Esophagus squamous epithelium (tissue), 5 donors: ENCODE measurements at regions of chr11 and their contacts with region 1.

Region 1: GRCh38 chr11:12893787-12894672 is 115.1 kb upstream of the RASSF10 start:
- DNase-seq: no peak
- H3K4me3 ChIP-seq: no peak overlapping the region
- H3K27ac ChIP-seq: peak overlapping the region in 2 of 4 donors; percentile 43
- H3K4me1 ChIP-seq: peaks cover 3 to 31% (median 4%) of the 10 kb centered on the region in 3 donors
- H3K27me3 ChIP-seq: no peaks in the 10 kb centered on the region
- CTCF ChIP-seq: peak; percentile 77 to 95 (median 89)
- POLR2A ChIP-seq: no peak

Region 2: DNA sequence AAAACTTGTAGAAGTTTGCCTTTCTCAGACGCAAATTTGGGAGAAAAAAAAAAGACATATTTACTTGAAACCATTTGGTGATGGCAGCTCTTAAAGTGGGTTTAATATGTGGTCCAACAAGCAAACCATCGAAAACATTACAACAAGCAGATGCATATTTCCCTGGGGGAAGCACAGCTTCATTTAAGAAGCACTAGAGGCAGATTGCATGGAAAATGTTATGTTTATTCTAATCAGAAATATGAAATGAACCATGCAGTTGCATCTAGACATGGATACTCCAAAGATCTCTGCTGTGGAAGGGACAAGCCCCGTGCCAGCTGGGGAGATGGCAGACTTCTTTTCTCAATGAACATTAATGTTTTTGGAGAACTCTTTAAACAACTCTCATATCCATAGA is 574.0 kb before region 1 on chr11:
- intact Hi-C with region 1: loop called (anchors 10 kb)
- DNase-seq: no peak
- H3K4me3 ChIP-seq: no peak overlapping the region
- H3K27ac ChIP-seq: no peak overlapping the region
- H3K4me1 ChIP-seq: peaks cover 0 to 10% (median 0%) of the 10 kb centered on the region in 3 donors
- H3K27me3 ChIP-seq: no peaks in the 10 kb centered on the region
- CTCF ChIP-seq: no peak
- POLR2A ChIP-seq: no peak

Region 3: GRCh38 chr11:12599408-12600143 is 294.5 kb before region 1 on chr11:
- intact Hi-C with region 1: loop called (anchors 10 kb)
- DNase-seq: no peak
- H3K4me3 ChIP-seq: no peak overlapping the region
- H3K27ac ChIP-seq: no peak overlapping the region
- H3K4me1 ChIP-seq: peaks cover 0 to 3% (median 0%) of the 10 kb centered on the region in 3 donors
- H3K27me3 ChIP-seq: no peaks in the 10 kb centered on the region
- CTCF ChIP-seq: peak in 5 of 6 experiments; percentile 63 to 80 (median 68)
- POLR2A ChIP-seq: no peak